ENCODE measurements at regions of chr6 and their contacts with region 1.

Region 1: GRCh38 chr6:106519460-106520394 is 109.6 kb downstream of the RTN4IP1 start:
- DNase-seq: peak; percentile 88
- ATAC-seq: peak; percentile 65
- H3K4me3 Mint-ChIP-seq: peak overlapping the region; percentile 97
- H3K27ac Mint-ChIP-seq: peak overlapping the region; percentile 99
- H3K4me1 Mint-ChIP-seq: peaks cover 67% of the 10 kb centered on the region
- H3K27me3 Mint-ChIP-seq: no peaks in the 10 kb centered on the region

Region 2: DNA sequence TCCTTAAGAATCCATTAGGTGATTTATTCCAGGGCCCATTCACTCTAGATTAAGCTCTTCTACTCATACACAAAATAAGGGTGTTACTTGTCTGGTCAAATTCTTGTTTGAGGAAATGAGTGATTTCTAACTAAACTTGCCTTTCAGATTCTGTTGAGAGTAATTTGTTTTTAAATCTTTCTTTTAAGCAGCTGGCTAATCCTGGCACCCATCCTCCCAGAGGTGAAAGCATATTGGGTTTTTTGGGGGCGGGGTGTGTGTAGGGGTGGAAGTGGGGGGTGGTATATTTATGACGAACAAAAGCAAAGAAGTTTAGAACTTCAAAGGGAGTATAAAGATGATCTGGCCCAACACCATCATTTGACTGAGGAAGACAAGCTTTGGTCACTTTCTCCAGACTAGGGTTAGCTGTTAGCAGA is 14.8 kb after region 1 on chr6:
- CTCF ChIA-PET with region 1: interaction called, 13 read pairs
- POLR2A ChIA-PET with region 1: interaction called, 20 read pairs
- DNase-seq: no peak
- ATAC-seq: no peak
- H3K4me3 Mint-ChIP-seq: no peak overlapping the region
- H3K27ac Mint-ChIP-seq: peak overlapping the region; percentile 58
- H3K4me1 Mint-ChIP-seq: peaks cover 61% of the 10 kb centered on the region
- H3K27me3 Mint-ChIP-seq: no peaks in the 10 kb centered on the region